ENCODE measurements at regions of chr11 and their contacts with region 1.

Region 1: DNA sequence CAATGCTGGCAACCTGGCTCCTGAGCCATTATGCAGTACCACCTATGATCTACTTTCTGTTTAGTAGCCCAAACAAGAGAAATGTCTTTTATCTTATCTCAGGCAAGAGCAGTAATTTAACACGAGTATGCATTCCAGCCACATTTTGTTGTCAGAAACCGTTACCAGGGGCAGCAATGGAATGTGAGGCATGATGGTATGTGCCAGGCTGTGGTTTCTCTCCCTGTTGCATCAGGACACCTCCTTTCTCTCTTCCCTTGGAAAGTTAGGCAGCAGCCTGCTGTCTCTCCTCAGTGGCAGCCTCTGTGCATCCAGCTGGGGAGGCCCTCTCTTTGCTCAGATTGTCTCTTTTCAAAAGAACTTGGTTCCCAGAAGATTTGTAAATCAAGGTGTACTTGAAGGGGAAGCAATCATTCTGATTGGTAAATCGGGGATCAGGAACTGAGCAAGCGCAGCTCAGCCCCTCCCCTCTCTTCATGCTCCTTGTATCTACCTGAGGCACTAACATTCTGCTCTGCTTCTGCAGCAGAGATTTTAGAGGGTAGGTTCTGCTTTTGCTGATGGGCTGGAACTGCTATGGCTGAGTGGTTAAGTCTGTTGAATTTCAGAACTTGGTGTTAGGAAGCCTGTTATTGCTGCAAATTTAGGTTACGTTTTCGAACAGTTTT is 229.2 kb downstream of the ADAMTS15 start:
- DNase-seq: peak; percentile 36
- ATAC-seq: peak; percentile 79

Region 2: GRCh38 chr11:130785380-130786116 is 107.9 kb after region 1 on chr11:
- intact Hi-C with region 1: loop called (anchors 5 kb)
- DNase-seq: no peak
- ATAC-seq: no peak